Activated T-helper 1 cell treated with anti-CD3 and anti-CD28 coated beads, Interleukin-12 subunit alpha, Interleukin-12 subunit beta, Interleukin-2, Interleukin-4 antibody, amounts not matched to agents 30 ng/mL and 10 ng/mL and 1 ng/mL, durations not matched to agents 14 hours and 24 hours and 36 hours (primary cell): ENCODE measurements at regions of chr14 and their contacts with region 1.

Region 1: DNA sequence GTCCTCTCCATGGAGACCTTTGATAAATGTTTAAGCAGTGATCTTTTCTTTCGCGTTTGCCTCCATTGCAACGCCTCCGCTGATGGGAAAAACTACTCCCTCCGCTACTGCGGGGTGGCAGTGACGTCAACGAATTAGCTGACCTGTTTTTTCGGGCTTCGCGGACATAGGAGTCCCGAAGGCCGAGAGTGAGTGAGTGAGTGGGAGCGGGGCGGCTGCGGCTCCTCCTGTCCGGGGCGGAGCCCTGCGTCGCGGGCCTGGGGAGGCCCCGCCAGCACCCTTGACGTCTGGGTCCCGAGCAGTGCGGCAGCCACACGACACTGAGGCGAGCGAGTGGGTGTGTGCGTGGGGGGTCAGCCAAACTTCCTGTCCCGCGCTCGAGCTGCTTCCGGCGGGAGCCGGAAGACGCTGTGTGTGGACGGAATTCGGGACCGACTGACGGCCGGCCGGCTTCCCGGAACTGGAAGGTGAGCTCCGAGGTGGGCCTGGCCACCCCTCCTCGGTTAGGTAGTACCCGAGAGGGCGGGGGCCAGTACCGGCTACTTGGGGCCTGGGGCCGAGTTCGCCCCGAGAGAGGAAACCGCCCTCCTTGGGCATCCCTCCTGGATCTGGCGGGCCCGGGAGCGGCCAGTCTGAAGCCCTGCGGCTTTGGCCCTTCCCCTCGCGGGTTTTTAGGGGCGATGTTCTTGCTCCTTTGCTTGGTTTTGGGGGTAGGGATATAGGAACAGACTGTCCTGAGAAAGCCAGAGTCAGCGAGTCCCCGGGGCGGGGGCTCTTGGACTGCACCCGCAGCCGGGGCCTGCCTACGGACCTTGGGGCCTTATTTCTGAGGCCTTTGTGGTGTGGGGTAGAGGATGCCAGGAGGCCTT is at the start of gene ZNF410:
- DNase-seq: peak; percentile 85
- H3K4me3 Mint-ChIP-seq: peak within 1 kb of the TSS; percentile 93
- H3K27ac Mint-ChIP-seq: peak within 1 kb of the TSS; percentile 98
- H3K4me1 Mint-ChIP-seq: peaks cover 54% of the 10 kb centered on the region
- H3K27me3 Mint-ChIP-seq: no peaks in the 10 kb centered on the region
- total RNA-seq, gene ZNF410: 70.1 and 71.8 TPM in 2 replicates

Region 2: DNA sequence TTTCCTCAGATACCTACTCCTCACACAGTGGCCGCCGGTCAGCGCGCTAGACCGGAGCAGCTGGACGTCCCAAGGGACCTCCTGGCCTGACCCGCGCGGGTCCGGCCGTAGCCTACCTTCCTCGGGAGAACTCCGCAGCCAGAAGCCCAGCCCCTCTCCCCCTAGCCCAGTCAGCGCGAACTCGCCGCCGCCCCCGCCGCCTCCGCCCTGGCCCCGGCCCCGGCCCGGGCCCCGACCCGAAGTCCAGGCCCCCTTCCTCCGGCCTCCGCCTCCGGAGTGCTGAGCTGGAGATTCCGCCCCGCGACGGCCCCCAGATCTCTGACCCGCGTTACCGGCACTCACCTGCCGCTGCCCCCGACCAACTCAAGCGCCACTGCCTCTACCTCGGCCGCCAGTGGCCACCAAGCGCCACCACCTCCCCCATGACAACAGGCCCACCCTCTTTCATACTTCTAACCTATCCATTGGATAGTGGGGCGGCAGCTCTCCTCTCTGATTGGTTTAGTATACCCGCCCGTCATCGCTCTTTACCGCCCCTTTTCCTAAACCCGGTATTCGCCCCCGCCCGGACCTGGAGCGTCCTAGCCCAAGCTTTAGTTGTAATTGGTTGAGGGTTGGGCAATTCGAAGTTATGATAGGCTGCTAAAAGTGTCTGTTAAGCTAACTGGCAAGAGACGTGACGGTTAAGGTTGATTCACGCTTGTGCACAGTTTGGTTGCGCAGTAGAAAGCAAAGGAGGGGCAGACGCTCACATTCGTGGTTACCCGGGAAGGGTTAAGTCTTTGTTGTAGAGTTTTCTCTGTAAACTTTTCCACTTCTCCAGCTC is 428.3 kb before region 1 on chr14 and contains the start of gene NUMB:
- intact Hi-C with region 1: loop called (anchors 1 kb)
- DNase-seq: peak; percentile 96
- H3K4me3 Mint-ChIP-seq: peak within 1 kb of the TSS; percentile 98
- H3K27ac Mint-ChIP-seq: peak within 1 kb of the TSS; percentile 98
- H3K4me1 Mint-ChIP-seq: peaks cover 58% of the 10 kb centered on the region
- H3K27me3 Mint-ChIP-seq: no peaks in the 10 kb centered on the region
- total RNA-seq, gene NUMB: 49.6 and 53.4 TPM in 2 replicates

Region 3: GRCh38 chr14:73553845-73554244 is 332.8 kb before region 1 on chr14:
- intact Hi-C with region 1: no loop called
- DNase-seq: no peak
- H3K4me3 Mint-ChIP-seq: no peak overlapping the region
- H3K27ac Mint-ChIP-seq: no peak overlapping the region
- H3K4me1 Mint-ChIP-seq: no peaks in the 10 kb centered on the region
- H3K27me3 Mint-ChIP-seq: no peaks in the 10 kb centered on the region

Region 4: DNA sequence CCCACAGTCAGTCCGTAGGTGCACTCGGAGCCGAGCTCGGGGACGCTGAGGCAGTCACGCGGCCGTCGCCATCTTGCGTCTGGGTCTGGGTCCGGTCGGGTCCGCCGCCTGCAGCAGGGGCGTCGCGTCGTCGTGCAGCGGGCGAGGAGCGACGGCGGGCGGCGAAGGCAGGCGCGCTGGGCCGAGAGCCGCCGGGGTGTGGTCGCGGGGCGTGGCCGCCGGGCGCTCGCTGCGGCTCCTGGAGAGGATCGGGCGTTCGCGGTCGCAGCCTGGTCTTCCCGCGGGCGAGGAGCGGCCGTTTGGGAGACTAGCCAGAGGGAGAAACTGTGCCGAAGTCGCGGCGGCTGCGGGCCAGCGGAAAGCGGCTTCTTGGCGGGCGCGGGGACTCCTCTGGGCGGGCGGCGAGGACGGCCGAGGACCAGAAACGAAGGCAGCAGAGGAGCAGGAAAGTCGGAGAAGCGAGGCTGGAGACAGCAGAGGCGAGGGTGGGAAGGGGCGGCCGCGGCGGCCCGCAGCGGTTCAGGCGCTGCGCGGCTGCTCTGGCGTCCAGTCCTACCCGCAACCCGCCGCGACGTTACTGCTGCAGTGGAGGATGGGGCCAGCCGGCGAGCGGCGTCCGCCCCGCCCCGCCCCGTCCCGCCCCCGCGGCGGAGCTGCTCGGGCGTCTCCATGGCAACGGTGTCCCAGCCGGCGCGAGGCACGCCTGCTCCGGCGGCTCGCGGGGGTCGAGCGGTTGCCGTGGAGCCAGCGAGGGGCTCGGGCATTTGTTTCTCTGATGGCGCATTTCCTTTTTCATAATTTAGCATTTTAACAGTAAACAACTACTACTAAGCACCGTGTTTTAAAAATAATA is 172.7 kb before region 1 on chr14 and contains the start of gene PNMA1:
- intact Hi-C with region 1: loop called (anchors 2 kb)
- DNase-seq: peak; percentile 86
- H3K4me3 Mint-ChIP-seq: peak within 1 kb of the TSS; percentile 87
- H3K27ac Mint-ChIP-seq: peak within 1 kb of the TSS; percentile 92
- H3K4me1 Mint-ChIP-seq: peaks cover 30% of the 10 kb centered on the region
- H3K27me3 Mint-ChIP-seq: no peaks in the 10 kb centered on the region
- total RNA-seq, gene PNMA1: 29.7 and 30.6 TPM in 2 replicates

Region 5: GRCh38 chr14:73759714-73760597 is 126.7 kb before region 1 on chr14:
- intact Hi-C with region 1: loop called (anchors 1 kb)
- DNase-seq: peak; percentile 95
- H3K4me3 Mint-ChIP-seq: peak overlapping the region; percentile 85
- H3K27ac Mint-ChIP-seq: peak overlapping the region; percentile 97
- H3K4me1 Mint-ChIP-seq: peaks cover 79% of the 10 kb centered on the region
- H3K27me3 Mint-ChIP-seq: no peaks in the 10 kb centered on the region

Region 6: GRCh38 chr14:73949744-73950734 is 63.4 kb after region 1 on chr14 and contains the starts of genes COQ6 and FAM161B:
- intact Hi-C with region 1: loop called (anchors 1 kb)
- DNase-seq: peak; percentile 93
- H3K4me3 Mint-ChIP-seq: peak within 1 kb of the TSS; percentile 99
- H3K27ac Mint-ChIP-seq: peak within 1 kb of the TSS; percentile 88
- H3K4me1 Mint-ChIP-seq: peaks cover 21% of the 10 kb centered on the region
- H3K27me3 Mint-ChIP-seq: no peaks in the 10 kb centered on the region
- total RNA-seq, gene COQ6: 17.9 and 19.2 TPM in 2 replicates
- total RNA-seq, gene FAM161B: 0.76 and 0.83 TPM in 2 replicates